Common myeloid progenitor, CD34-positive (primary cell): ENCODE measurements at regions of chr15 and their contacts with region 1.

Region 1: GRCh38 chr15:79004336-79004735 is 59.5 kb upstream of the CTSH start:
- DNase-seq: peak; percentile 75 to 95 (median 92)
- H3K4me3 ChIP-seq: no peak overlapping the region
- H3K27ac ChIP-seq: no peak overlapping the region
- H3K4me1 ChIP-seq: peaks cover 7 to 37% (median 18%) of the 10 kb centered on the region in 4 experiments
- H3K27me3 ChIP-seq: no peaks in the 10 kb centered on the region

Region 2: GRCh38 chr15:78726870-78727551 is 277.3 kb before region 1 on chr15:
- CTCF ChIA-PET with region 1: no interaction called
- POLR2A ChIA-PET with region 1: no interaction called
- DNase-seq: peak; percentile 17 to 47 (median 36)
- H3K4me3 ChIP-seq: no peak overlapping the region
- H3K27ac ChIP-seq: no peak overlapping the region
- H3K4me1 ChIP-seq: peaks cover 0 to 9% (median 0%) of the 10 kb centered on the region in 4 experiments
- H3K27me3 ChIP-seq: no peaks in the 10 kb centered on the region

Region 3: GRCh38 chr15:78925956-78926670 is 78.2 kb before region 1 on chr15:
- CTCF ChIA-PET with region 1: interaction called, 11 read pairs
- POLR2A ChIA-PET with region 1: no interaction called
- DNase-seq: no peak
- H3K4me3 ChIP-seq: no peak overlapping the region
- H3K27ac ChIP-seq: no peak overlapping the region
- H3K4me1 ChIP-seq: no peaks in the 10 kb centered on the region
- H3K27me3 ChIP-seq: no peaks in the 10 kb centered on the region

Region 4: GRCh38 chr15:78979456-78980320 is 24.6 kb before region 1 on chr15:
- CTCF ChIA-PET with region 1: interaction called, 11 read pairs
- POLR2A ChIA-PET with region 1: no interaction called
- DNase-seq: peak; percentile 33 to 59 (median 56)
- H3K4me3 ChIP-seq: no peak overlapping the region
- H3K27ac ChIP-seq: no peak overlapping the region
- H3K4me1 ChIP-seq: peaks cover 0 to 45% (median 4%) of the 10 kb centered on the region in 4 experiments
- H3K27me3 ChIP-seq: no peaks in the 10 kb centered on the region

Region 5: DNA sequence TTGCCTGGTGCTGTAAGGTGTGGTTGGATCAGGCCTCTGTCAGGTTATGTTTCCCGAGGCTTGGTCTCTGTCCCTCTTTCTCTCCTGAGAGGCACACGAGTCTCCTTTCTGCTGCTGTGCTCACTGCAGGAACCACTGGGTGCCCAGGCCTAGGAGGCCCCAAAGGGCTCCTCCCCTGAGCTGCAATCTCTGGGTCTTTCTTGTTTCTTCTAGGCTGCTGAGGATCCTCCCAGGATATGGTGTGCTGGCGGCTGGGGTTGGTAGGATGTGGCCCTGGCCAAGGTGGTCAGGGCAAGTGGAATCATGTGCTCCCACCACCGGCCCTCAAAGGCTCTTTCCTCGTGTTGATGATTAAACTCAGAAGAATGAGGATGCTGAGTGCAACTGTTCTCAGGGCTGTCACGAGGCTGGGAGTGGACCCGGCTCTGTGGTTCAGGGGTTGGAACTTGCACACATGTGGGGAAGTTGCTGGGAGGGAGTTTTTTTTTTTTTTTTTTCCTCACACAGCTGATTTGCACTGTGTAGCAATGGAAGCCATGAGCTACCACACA is 15.9 kb before region 1 on chr15:
- CTCF ChIA-PET with region 1: interaction called, 15 read pairs
- POLR2A ChIA-PET with region 1: no interaction called
- DNase-seq: peak; percentile 72 to 95 (median 87)
- H3K4me3 ChIP-seq: no peak overlapping the region
- H3K27ac ChIP-seq: no peak overlapping the region
- H3K4me1 ChIP-seq: peaks cover 0 to 41% (median 13%) of the 10 kb centered on the region in 4 experiments
- H3K27me3 ChIP-seq: no peaks in the 10 kb centered on the region